Gastrocnemius medialis (tissue), 4 donors: ENCODE measurements at regions of chr10 and their contacts with region 1.

Region 1: GRCh38 chr10:12782537-12782936 is 219.0 kb downstream of the CCDC3 start:
- DNase-seq: no peak
- ATAC-seq: peak in 1 of 2 donors; percentile 10
- H3K4me3 ChIP-seq: no peak overlapping the region
- H3K27ac ChIP-seq: no peak overlapping the region
- H3K4me1 ChIP-seq: no peaks in the 10 kb centered on the region
- H3K27me3 ChIP-seq: peaks cover 0 to 9% (median 0%) of the 10 kb centered on the region in 3 donors
- CTCF ChIP-seq: peak; percentile 53 to 77 (median 67)
- POLR2A ChIP-seq: no peak

Region 2: DNA sequence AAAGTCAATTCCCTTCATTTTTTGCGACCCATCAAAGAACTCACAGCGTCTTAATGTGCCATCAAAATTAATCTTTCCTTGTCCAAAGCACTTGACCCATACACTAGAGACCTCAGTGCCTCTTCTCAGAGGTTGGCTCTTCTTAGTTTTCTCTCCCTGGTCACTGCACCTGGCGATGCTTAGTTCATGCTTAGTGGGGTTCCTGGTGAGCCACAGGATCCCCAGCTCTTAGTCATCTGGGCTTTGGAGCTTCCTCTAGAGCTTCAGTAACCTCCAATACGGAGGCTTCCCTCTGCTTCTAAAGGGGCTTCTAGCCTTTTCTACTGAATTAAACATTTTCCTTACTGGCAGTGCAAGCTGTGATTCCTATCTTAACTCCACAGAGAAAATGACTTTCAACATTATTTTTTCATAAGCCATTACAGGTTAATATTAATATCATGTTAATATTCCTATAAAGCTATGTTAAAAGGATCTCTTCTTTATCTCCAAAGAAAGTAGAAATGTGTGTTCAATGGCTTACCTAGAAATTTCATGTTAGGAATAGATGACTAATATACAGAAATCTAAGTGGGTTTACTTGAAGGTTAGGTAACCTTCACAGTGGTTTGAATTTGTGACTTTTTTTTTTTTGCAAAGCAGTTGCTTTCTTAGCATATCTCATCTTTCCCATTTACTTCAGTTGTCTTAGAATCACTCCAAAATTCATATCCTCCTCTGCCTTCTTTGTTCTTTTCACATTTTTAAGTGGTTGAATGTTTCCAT is 138.0 kb before region 1 on chr10:
- in situ Hi-C with region 1: no loop called
- intact Hi-C with region 1: no loop called
- DNase-seq: no peak
- ATAC-seq: no peak
- H3K4me3 ChIP-seq: no peak overlapping the region
- H3K27ac ChIP-seq: no peak overlapping the region
- H3K4me1 ChIP-seq: no peaks in the 10 kb centered on the region
- H3K27me3 ChIP-seq: no peaks in the 10 kb centered on the region
- CTCF ChIP-seq: no peak
- POLR2A ChIP-seq: no peak

Region 3: DNA sequence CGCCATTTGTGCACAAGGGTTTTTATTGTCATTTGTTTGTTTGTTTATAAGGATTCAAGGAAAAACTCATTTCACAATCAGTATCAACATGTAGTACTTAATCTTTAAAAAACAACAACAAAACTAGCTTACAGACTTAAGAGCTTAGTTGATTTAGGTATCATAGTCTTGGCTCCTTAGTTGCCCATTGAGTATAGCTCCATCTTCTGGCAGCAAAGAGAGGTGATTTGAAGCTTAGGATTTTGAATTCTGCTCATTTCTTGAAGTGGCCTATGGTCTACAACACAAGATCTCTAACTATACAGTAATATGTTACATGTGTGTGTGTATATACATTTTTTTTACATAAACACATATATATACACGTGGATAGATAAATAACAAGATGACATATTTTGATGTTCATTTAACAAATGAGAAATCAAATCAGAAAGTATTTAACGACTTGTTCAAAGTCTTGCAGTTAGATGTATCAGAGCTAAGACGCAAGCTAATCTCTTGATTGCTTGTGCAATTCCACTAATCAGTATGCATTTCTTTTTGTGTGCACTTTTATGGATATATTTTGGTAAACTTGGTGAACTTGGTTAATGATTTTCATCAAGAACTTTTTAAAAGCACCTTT is 125.9 kb before region 1 on chr10:
- in situ Hi-C with region 1: no loop called
- intact Hi-C with region 1: no loop called
- DNase-seq: no peak
- ATAC-seq: no peak
- H3K4me3 ChIP-seq: no peak overlapping the region
- H3K27ac ChIP-seq: no peak overlapping the region
- H3K4me1 ChIP-seq: no peaks in the 10 kb centered on the region
- H3K27me3 ChIP-seq: no peaks in the 10 kb centered on the region
- CTCF ChIP-seq: peak in 3 of 5 experiments; percentile 32 to 48 (median 43)
- POLR2A ChIP-seq: no peak

Region 4: DNA sequence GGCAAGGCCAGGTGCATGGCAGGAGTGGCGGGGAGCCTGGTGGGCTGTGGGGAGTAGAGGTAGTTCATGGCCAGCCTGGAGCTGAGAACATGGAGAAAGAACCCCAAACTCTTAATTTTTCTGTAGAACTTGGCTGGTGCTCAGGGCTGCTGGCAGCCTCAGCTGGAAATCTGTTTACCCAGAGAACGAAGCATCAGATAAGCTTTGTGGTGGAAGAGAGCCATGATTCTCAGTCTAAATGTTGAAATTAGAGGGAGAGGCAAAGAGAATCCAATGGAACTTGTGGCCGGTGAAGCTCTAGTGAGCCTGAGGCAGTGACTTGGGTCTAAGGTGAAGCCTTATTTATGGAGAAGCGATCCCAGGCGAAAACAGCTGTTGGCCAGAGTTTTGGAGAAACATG is 92.6 kb after region 1 on chr10:
- in situ Hi-C with region 1: no loop called
- intact Hi-C with region 1: no loop called
- DNase-seq: no peak
- ATAC-seq: no peak
- H3K4me3 ChIP-seq: no peak overlapping the region
- H3K27ac ChIP-seq: no peak overlapping the region
- H3K4me1 ChIP-seq: no peaks in the 10 kb centered on the region
- H3K27me3 ChIP-seq: no peaks in the 10 kb centered on the region
- CTCF ChIP-seq: no peak
- POLR2A ChIP-seq: no peak

Region 5: GRCh38 chr10:12902135-12902572 is 119.6 kb after region 1 on chr10:
- in situ Hi-C with region 1: no loop called
- intact Hi-C with region 1: loop called (anchors 10 kb)
- DNase-seq: no peak
- ATAC-seq: no peak
- H3K4me3 ChIP-seq: no peak overlapping the region
- H3K27ac ChIP-seq: no peak overlapping the region
- H3K4me1 ChIP-seq: no peaks in the 10 kb centered on the region
- H3K27me3 ChIP-seq: no peaks in the 10 kb centered on the region
- CTCF ChIP-seq: peak; percentile 20 to 75 (median 63)
- POLR2A ChIP-seq: no peak

Region 6: GRCh38 chr10:13074561-13075451 is 292.3 kb after region 1 on chr10:
- in situ Hi-C with region 1: loop called in 1 of 4 experiments (anchors 25 kb)
- intact Hi-C with region 1: loop called (anchors 5 kb)
- DNase-seq: peak in 1 of 2 donors; percentile 33
- ATAC-seq: peak in 1 of 2 donors; percentile 56
- H3K4me3 ChIP-seq: no peak overlapping the region
- H3K27ac ChIP-seq: no peak overlapping the region
- H3K4me1 ChIP-seq: no peaks in the 10 kb centered on the region
- H3K27me3 ChIP-seq: peaks cover 0 to 4% (median 0%) of the 10 kb centered on the region in 3 donors
- CTCF ChIP-seq: peak; percentile 50 to 85 (median 66)
- POLR2A ChIP-seq: no peak